ENCODE measurements at regions of chr7 and their contacts with region 1.

Region 1: GRCh38 chr7:142598297-142598696 is 151.0 kb upstream of the PRSS1 start:
- DNase-seq: no peak
- H3K4me3 ChIP-seq: no peak overlapping the region
- CTCF ChIP-seq: no peak

Region 2: DNA sequence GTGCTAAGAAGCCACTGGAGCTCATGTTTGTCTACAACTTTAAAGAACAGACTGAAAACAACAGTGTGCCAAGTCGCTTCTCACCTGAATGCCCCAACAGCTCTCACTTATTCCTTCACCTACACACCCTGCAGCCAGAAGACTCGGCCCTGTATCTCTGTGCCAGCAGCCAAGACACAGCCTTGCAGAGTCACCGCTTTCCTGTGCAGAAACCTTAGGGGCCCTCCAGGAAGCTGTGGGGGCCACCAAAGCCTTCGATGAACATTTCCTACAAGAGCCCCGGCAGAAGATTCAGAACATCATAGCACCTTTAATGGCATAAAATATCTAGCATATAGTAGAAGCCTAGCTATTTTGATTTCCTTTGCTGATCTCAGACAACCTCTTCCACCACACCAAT is 252.5 kb before region 1 on chr7:
- in situ Hi-C with region 1: no loop called
- DNase-seq: no peak
- H3K4me3 ChIP-seq: no peak overlapping the region
- CTCF ChIP-seq: no peak

Region 3: DNA sequence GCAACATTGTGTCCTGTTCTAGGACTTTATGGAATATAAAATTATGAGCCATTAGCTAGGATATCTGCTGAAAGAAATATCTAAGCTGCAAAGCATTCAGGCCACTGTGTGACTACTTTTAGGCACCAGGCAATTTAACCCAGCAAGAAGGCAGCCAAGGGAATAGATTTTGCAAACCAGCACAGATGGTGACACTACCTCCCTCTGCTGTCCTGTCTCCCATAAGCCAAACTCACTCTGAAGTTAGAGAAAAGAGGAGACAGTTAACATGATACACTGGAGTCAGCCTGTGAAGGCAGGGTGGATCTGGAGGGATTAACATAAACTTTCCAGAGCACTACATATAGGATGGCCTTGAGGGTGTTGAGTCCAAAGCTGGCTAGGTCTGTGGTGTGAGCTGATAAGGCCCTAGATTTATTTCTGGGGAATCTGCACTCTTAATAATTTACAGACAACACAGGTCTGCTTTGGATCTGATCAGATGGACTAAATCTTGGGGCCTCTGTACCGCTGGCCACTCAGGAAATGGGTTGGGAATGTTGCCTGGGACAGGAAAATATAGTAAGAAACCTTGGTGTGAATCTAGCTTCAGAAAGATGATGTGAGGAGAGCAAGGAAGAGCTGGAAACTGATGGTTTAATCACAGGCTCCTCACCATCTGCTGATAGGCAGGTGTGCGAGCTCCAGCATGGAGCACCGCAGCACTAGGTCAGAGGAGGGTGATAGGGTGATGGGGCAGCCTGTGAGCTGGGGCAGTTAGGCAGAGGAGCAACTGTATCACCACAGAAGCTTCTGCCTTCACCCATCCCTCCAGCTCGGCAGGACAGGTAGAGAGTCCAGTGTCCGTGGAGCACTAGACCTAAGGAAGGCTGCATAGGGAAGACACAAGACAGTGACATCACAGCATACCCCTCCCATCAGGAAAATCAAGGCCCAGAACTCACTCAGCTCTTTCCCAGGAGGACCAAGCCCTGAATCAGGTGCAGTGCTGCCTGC is 78.9 kb before region 1 on chr7:
- in situ Hi-C with region 1: loop called (anchors 5 kb)
- DNase-seq: no peak
- H3K4me3 ChIP-seq: no peak overlapping the region
- CTCF ChIP-seq: peak; percentile 14